ENCODE measurements at regions of chr18 and their contacts with region 1.

Region 1: DNA sequence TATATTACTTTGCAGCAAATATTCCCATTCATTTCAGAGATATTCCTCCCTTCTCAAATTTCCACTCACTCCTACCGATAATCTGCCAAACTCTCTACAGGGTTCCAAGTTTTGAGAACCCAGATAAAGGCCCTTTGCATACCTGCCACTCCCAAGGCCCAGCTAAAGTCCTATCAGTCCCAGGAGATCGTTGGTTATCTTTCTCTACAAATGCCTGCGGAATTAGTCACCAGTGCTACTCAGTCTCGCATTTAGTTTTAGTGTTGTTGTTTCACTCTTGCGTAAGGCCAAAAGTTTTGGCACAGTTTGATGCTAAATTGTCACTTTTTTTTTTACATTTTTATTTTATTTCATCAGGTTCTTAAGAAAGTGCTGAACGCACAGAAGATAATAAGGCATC is 29.2 kb upstream of the SETBP1 start:
- DNase-seq: no peak
- H3K4me3 ChIP-seq: no peak overlapping the region
- H3K27ac ChIP-seq: no peak overlapping the region
- H3K4me1 ChIP-seq: peaks cover 17% of the 10 kb centered on the region
- H3K27me3 ChIP-seq: no peaks in the 10 kb centered on the region
- CTCF ChIP-seq: no peak

Region 2: DNA sequence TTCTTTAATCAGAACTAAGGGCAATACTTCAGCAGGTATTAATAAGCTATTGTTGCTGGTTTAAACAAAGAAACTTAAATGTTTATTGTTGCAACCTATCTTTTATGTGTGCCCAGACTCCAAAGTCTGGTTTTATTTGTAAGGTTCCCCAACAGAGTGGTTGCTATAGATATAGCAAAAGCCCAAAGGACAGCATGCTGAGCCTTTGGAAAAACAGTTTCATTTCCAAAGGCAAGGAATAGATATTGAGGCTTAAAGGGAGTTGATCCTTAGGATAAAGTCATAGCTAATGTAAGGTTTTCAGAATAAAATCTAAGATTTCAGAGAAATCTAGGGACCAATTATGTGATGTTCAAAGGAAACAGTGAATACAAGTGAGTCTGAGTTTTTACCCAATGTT is 550.6 kb after region 1 on chr18:
- intact Hi-C with region 1: loop called (anchors 10 kb)
- DNase-seq: no peak
- H3K4me3 ChIP-seq: no peak overlapping the region
- H3K27ac ChIP-seq: no peak overlapping the region
- H3K4me1 ChIP-seq: no peaks in the 10 kb centered on the region
- H3K27me3 ChIP-seq: peaks cover 9% of the 10 kb centered on the region
- CTCF ChIP-seq: no peak